CD8-positive, alpha-beta memory T cell (primary cell): ENCODE measurements at regions of chr2 and their contacts with region 1.

Region 1: DNA sequence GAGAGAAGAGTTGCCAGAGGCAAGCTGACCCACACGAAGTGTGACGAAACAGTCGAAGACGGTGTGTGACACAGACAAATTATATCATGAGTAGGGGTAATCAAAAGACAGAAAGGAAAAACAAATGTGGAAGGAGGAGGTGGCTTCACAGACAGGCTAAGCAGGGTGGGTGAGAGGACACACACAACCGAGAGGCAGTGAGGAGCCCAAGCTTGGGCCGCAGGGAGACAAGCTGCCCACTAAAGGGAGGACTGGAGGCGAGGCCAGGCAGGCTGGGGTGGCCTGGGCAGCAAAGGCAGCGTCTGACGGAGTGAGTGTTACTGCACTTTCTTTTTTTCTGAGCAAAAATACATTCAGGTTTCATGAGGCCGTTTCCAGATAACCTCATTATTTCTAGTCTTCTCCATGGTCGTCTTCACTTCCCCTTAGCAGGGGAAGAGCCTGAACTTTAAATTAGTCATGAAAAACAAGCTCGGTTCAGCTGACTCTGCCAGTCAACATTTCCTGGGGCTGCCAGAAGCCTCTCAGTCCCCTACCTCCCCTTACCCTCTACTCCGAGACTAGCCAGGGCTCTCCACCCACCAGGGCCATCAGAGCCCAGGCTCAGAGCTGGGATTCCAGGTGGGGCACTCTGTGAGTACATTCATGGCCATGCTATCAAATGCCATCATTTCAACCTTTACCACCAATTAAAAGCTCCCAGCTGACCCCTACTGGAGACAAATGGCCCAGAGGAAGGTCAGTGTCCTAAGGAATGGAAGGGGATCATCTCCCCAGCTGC is 13.8 kb upstream of the ZFP36L2 start:
- DNase-seq: no peak
- H3K4me3 ChIP-seq: no peak overlapping the region
- H3K4me3 Mint-ChIP-seq: no peak overlapping the region
- H3K27ac ChIP-seq: no peak overlapping the region
- H3K27ac Mint-ChIP-seq: peak overlapping the region in 4 of 8 donors; percentile 0 to 77 (median 6)
- H3K4me1 ChIP-seq: no peaks in the 10 kb centered on the region
- H3K4me1 Mint-ChIP-seq: peaks cover 13 to 22% (median 13%) of the 10 kb centered on the region in 3 donors
- H3K27me3 ChIP-seq: no peaks in the 10 kb centered on the region
- H3K27me3 Mint-ChIP-seq: no peaks in the 10 kb centered on the region

Region 2: DNA sequence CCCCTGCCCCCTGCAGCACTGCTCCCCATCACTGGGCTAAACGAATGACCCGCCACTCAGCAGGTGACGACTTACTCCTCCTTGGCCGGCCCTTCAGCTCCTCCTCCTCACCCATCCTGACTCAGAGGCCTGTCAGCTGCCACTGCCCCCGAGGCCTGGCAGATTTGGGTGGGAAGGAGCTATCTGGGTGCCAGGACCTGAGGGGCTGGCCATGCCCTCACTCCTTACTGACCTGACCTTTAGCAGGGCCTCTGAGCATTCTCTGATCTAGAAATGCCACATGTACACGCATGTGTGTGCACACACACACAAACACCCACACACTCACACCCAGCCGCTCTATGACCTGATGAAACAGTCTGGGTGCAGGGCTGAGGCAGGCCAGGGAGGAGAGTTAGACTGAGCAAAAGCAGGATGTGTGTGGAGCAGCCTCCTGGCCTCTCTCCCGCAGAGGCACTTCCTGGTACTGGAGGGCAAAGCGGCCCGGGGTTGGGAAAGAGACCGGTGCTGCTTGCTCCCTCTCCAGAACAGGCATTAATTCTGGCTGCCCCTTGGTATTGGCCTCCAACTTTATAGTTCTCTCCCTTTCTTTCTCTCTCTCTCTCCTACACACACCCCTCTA is 81.8 kb before region 1 on chr2:
- CTCF ChIA-PET with region 1: no interaction called
- POLR2A ChIA-PET with region 1: no interaction called
- DNase-seq: peak in 2 of 5 donors; percentile 43 to 72
- H3K4me3 ChIP-seq: peak overlapping the region; percentile 7
- H3K4me3 Mint-ChIP-seq: peak overlapping the region; percentile 59 to 86 (median 74)
- H3K27ac ChIP-seq: peak overlapping the region; percentile 66
- H3K27ac Mint-ChIP-seq: peak overlapping the region; percentile 92 to 99 (median 97)
- H3K4me1 ChIP-seq: peaks cover 78% of the 10 kb centered on the region
- H3K4me1 Mint-ChIP-seq: peaks cover 64 to 94% (median 71%) of the 10 kb centered on the region in 3 donors
- H3K27me3 ChIP-seq: no peaks in the 10 kb centered on the region
- H3K27me3 Mint-ChIP-seq: peaks cover 0 to 1% of the 10 kb centered on the region in 2 donors

Region 3: GRCh38 chr2:43262951-43263350 is 22.8 kb after region 1 on chr2:
- CTCF ChIA-PET with region 1: no interaction called
- POLR2A ChIA-PET with region 1: interaction called, 11 read pairs
- DNase-seq: no peak
- H3K4me3 ChIP-seq: no peak overlapping the region
- H3K4me3 Mint-ChIP-seq: no peak overlapping the region
- H3K27ac ChIP-seq: no peak overlapping the region
- H3K27ac Mint-ChIP-seq: peak overlapping the region in 3 of 8 donors; percentile 17 to 71 (median 34)
- H3K4me1 ChIP-seq: no peaks in the 10 kb centered on the region
- H3K4me1 Mint-ChIP-seq: no peaks in the 10 kb centered on the region
- H3K27me3 ChIP-seq: no peaks in the 10 kb centered on the region
- H3K27me3 Mint-ChIP-seq: no peaks in the 10 kb centered on the region